ENCODE measurements at regions of chr1 and their contacts with region 1.

Region 1: DNA sequence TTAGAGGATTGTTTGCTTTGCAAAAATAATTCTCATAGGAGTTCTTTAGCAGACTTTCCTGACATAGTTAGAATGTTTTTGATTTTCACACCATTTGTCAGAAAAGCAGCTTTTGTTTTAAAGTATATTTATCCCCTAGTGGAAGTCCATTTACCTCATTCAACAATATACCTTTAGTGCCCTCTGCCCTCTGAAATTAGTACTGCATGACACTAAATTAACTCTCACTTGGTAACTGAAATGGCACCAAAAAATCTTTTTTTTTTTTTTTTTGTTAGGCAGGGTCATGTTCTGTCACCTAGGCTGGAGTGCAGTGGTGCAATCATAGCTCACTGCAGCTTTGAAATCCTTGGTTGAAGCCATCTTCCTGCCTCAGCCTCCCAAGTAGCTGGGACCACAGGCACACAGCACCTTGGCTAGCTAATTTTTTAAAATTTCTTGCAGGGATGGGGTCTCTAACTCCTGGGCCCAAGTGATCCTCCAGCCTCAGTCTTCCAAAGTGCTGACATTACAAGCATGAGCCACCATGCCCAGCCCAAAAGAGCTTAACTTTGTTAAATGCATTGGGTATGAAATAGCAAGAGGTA is 13.6 kb downstream of the LRRC42 start:
- DNase-seq: peak; percentile 33 to 41
- ATAC-seq: peak; percentile 63 to 66; a peak in 3 of 6 replicates
- H3K4me3 ChIP-seq: no peak overlapping the region
- H3K27ac ChIP-seq: no peak overlapping the region
- H3K4me1 ChIP-seq: peaks cover 17% of the 10 kb centered on the region
- CTCF ChIP-seq: peak; percentile 53; the same call in 2 of the 3 replicates
- EP300 ChIP-seq: no peak
- POLR2A ChIP-seq: no peak
- RAD21 ChIP-seq: peak; percentile 46 to 57; a peak in 3 of 5 replicates

Region 2: DNA sequence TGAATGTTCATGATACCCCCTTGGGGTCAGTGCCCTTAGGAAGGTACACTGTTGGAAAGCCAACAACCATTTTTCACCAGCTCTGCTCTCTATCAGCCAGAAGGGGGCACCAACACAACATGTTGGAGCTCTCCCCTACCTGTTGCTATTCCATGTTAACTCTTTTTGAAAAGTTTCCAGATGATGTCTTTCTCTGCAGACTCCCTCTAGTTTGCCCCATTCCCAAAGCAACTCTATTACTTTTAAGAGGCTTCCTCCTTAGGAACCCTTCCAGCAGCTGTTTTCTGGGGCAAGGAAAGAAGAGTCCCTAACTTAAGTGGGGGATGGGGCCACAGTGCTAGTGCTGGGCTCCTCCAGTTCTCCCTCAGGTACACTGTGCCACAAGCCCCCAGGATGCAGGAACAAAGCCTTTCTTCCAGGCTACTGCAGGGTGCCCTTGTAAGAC is 98.8 kb before region 1 on chr1:
- CTCF ChIA-PET with region 1: interaction called, 53 read pairs
- POLR2A ChIA-PET with region 1: no interaction called
- DNase-seq: peak; percentile 50 to 56
- ATAC-seq: peak; percentile 90 to 94
- H3K4me3 ChIP-seq: no peak overlapping the region
- H3K27ac ChIP-seq: no peak overlapping the region
- H3K4me1 ChIP-seq: no peaks in the 10 kb centered on the region
- CTCF ChIP-seq: peak; percentile 78
- EP300 ChIP-seq: no peak
- POLR2A ChIP-seq: no peak
- RAD21 ChIP-seq: peak; percentile 72 to 81

Region 3: DNA sequence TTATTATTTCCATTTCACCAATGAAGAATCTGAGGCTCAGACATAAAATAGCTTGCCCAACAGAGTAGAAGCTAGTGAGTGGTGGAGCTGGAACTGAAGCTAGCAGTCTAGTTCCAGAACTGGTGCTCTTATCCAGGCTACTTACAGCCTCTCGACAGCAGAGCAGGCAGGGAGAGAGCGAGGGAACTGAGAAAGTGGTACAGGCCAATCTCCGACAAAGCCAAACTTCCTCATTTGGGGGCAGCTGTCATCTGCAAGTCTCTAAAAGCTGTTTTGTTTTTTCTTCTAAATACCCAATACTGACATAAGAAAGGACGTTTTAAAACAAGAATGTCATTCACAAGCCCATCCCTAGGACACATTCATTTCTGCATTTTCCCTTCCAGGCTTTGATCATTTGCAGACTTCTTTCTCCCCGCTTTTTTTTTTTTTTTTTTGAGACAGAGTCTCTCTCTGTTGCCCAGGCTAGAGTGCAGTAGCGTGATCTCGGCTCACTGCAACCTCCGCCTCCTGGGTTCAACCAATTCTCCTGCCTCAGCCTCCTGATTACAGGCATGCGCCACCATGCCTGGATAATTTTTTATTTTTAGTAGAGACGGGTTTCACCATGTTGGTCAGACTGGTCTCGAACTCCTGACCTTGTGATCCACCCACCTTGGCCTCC is 90.2 kb before region 1 on chr1:
- CTCF ChIA-PET with region 1: interaction called, 28 read pairs
- POLR2A ChIA-PET with region 1: no interaction called
- DNase-seq: no peak
- ATAC-seq: no peak
- H3K4me3 ChIP-seq: no peak overlapping the region
- H3K27ac ChIP-seq: no peak overlapping the region
- H3K4me1 ChIP-seq: no peaks in the 10 kb centered on the region
- CTCF ChIP-seq: no peak
- EP300 ChIP-seq: no peak
- POLR2A ChIP-seq: no peak
- RAD21 ChIP-seq: no peak

Region 4: DNA sequence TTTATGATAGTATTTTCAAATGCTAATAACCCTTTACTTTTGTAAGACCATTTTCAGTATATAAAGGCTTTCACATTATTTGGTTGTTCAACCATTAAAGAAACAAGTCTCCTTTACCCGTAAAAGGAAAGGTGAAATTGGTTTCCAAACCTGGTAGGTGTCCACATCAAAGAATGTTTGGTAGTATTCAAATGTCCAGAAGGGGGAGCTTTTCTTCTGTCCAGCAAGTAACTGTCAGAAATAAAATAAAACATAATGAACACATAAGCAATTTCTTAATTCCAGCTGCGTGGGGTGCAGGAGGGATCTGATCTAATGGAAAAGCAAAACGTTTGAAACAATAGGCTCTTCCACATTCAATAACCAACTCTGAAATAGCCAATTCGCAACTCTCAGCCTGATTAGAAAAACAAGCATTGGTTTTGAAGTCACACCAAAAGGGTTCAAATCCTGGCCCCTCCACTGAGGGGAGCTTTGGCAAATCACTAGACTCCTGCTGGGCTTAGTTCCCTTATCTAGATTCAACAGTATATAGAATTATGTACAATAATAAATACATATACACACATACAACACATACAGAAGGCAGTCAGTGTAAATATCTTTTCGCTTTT is 81.2 kb before region 1 on chr1:
- CTCF ChIA-PET with region 1: interaction called, 36 read pairs
- POLR2A ChIA-PET with region 1: no interaction called
- DNase-seq: peak; percentile 11 to 59
- ATAC-seq: peak in 1 of 2 experiments; percentile 46; a peak in 1 of 6 replicates
- H3K4me3 ChIP-seq: no peak overlapping the region
- H3K27ac ChIP-seq: no peak overlapping the region
- H3K4me1 ChIP-seq: no peaks in the 10 kb centered on the region
- CTCF ChIP-seq: peak; percentile 72
- EP300 ChIP-seq: no peak
- POLR2A ChIP-seq: no peak
- RAD21 ChIP-seq: peak; percentile 55 to 59

Region 5: GRCh38 chr1:53899206-53899628 is 60.5 kb before region 1 on chr1:
- CTCF ChIA-PET with region 1: interaction called, 11 read pairs
- POLR2A ChIA-PET with region 1: no interaction called
- DNase-seq: no peak
- ATAC-seq: peak in 1 of 2 experiments; percentile 25; a peak in 1 of 6 replicates
- H3K4me3 ChIP-seq: no peak overlapping the region
- H3K27ac ChIP-seq: no peak overlapping the region
- H3K4me1 ChIP-seq: peaks cover 19% of the 10 kb centered on the region; the same call in 2 of the 3 replicates
- CTCF ChIP-seq: no peak
- EP300 ChIP-seq: no peak
- POLR2A ChIP-seq: no peak
- RAD21 ChIP-seq: no peak

Region 6: GRCh38 chr1:53945433-53946251 is 14.1 kb before region 1 on chr1 and contains the start of gene IFT25:
- CTCF ChIA-PET with region 1: interaction called, 45 read pairs
- POLR2A ChIA-PET with region 1: interaction called, 17 read pairs
- DNase-seq: peak; percentile 49 to 94
- ATAC-seq: peak; percentile 77 to 91
- H3K4me3 ChIP-seq: peak within 1 kb of the TSS; percentile 72
- H3K27ac ChIP-seq: peak within 1 kb of the TSS; percentile 93 to 96
- H3K4me1 ChIP-seq: peaks cover 9% of the 10 kb centered on the region; the same call in 2 of the 3 replicates
- CTCF ChIP-seq: no peak
- EP300 ChIP-seq: no peak
- POLR2A ChIP-seq: peak; percentile 68
- RAD21 ChIP-seq: no peak
- polyA plus RNA-seq, gene IFT25: 37.0 and 49.4 TPM in 2 replicates

Region 7: GRCh38 chr1:53971718-53972117 is 12.0 kb after region 1 on chr1:
- CTCF ChIA-PET with region 1: interaction called, 26 read pairs
- POLR2A ChIA-PET with region 1: no interaction called
- DNase-seq: no peak
- ATAC-seq: no peak
- H3K4me3 ChIP-seq: no peak overlapping the region
- H3K27ac ChIP-seq: no peak overlapping the region
- H3K4me1 ChIP-seq: peaks cover 18% of the 10 kb centered on the region
- CTCF ChIP-seq: no peak
- EP300 ChIP-seq: no peak
- POLR2A ChIP-seq: no peak
- RAD21 ChIP-seq: no peak

Region 8: DNA sequence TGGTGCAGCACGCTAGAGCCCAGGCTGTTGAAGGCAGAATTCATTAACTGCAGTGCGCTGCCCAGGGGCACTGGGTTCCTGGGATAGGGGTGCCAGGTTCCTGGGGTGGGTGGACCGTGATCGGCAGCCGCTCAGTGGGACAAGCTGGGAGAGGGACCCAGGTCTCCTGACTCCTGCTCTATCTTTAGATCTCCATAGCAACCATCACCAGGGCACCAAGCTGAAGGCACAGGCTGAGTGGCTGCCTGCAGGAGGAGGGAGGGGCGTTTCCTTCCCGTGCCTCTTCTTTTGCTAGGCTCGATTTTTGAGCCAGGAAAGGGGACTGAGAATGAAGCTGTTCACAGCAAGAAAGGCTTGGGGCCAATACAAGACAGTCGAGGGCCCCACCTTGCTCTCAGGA is 213.9 kb after region 1 on chr1:
- CTCF ChIA-PET with region 1: no interaction called
- POLR2A ChIA-PET with region 1: no interaction called
- DNase-seq: no peak
- ATAC-seq: no peak
- H3K4me3 ChIP-seq: no peak overlapping the region
- H3K27ac ChIP-seq: no peak overlapping the region
- H3K4me1 ChIP-seq: no peaks in the 10 kb centered on the region
- CTCF ChIP-seq: no peak
- EP300 ChIP-seq: no peak
- POLR2A ChIP-seq: no peak
- RAD21 ChIP-seq: no peak